K562 (cell line): ENCODE measurements at regions of chr6 and their contacts with region 1.

Region 1: GRCh38 chr6:30571075-30571768 is at the start of gene ABCF1:
- DNase-seq: peak; percentile 99
- ATAC-seq: peak; percentile 95
- H3K4me3 ChIP-seq: peak within 1 kb of the TSS; percentile 67
- H3K27ac ChIP-seq: peak within 1 kb of the TSS; percentile 92
- H3K4me1 ChIP-seq: peaks cover 24 to 35% of the 10 kb centered on the region in 2 experiments; a peak in 4 of 5 replicates
- H3K27me3 ChIP-seq: no peaks in the 10 kb centered on the region
- CTCF ChIP-seq: 0 out of 6 replicates have a peak, but pooled peaks of 1 of the 3 experiments have one; percentile 13
- EP300 ChIP-seq: peak; percentile 41; the same call in 1 of the 2 replicates
- POLR2A ChIP-seq: peak; percentile 99
- RAD21 ChIP-seq: no peak
- polyA plus RNA-seq, gene ABCF1: 41.6 to 43.5 TPM

Region 2: GRCh38 chr6:30556066-30556905 is 14.9 kb before region 1 on chr6 and contains the start of gene GNL1:
- CTCF ChIA-PET with region 1: no interaction called
- POLR2A ChIA-PET with region 1: interaction called, 41 read pairs
- in situ Hi-C with region 1: no loop called
- intact Hi-C with region 1: loop called (anchors 1 kb)
- DNase-seq: peak; percentile 97 to 99 (median 98)
- ATAC-seq: peak; percentile 90
- H3K4me3 ChIP-seq: peak within 1 kb of the TSS; percentile 80
- H3K27ac ChIP-seq: peak within 1 kb of the TSS; percentile 94
- H3K4me1 ChIP-seq: peaks cover 17 to 23% of the 10 kb centered on the region in 2 experiments; a peak in 4 of 5 replicates
- H3K27me3 ChIP-seq: no peaks in the 10 kb centered on the region
- CTCF ChIP-seq: no peak
- EP300 ChIP-seq: no peak
- POLR2A ChIP-seq: peak; percentile 8
- RAD21 ChIP-seq: no peak
- polyA plus RNA-seq, gene GNL1: 0.73 to 1.3 TPM

Region 3: GRCh38 chr6:30583921-30584320 is 12.7 kb after region 1 on chr6:
- CTCF ChIA-PET with region 1: no interaction called
- POLR2A ChIA-PET with region 1: interaction called, 14 read pairs
- in situ Hi-C with region 1: no loop called
- intact Hi-C with region 1: no loop called
- DNase-seq: no peak
- ATAC-seq: no peak
- H3K4me3 ChIP-seq: no peak overlapping the region
- H3K27ac ChIP-seq: no peak overlapping the region
- H3K4me1 ChIP-seq: no peaks in the 10 kb centered on the region
- H3K27me3 ChIP-seq: no peaks in the 10 kb centered on the region
- CTCF ChIP-seq: no peak
- EP300 ChIP-seq: no peak
- POLR2A ChIP-seq: no peak
- RAD21 ChIP-seq: no peak